Testis (tissue), 5 donors: ENCODE measurements at regions of chr3 and their contacts with region 1.

Region 1: GRCh38 chr3:14124615-14125190 is at the starts of genes CHCHD4 and TMEM43:
- DNase-seq: peak; percentile 99
- H3K4me3 ChIP-seq: peak within 1 kb of the TSS; percentile 69 to 92
- H3K27ac ChIP-seq: peak within 1 kb of the TSS; percentile 84 to 86
- H3K4me1 ChIP-seq: peaks cover 26% of the 10 kb centered on the region
- H3K27me3 ChIP-seq: no peaks in the 10 kb centered on the region
- CTCF ChIP-seq: no peak
- POLR2A ChIP-seq: no peak
- total RNA-seq, gene CHCHD4: 13.3 to 15.7 TPM
- total RNA-seq, gene TMEM43: 36.5 to 53.0 TPM

Region 2: DNA sequence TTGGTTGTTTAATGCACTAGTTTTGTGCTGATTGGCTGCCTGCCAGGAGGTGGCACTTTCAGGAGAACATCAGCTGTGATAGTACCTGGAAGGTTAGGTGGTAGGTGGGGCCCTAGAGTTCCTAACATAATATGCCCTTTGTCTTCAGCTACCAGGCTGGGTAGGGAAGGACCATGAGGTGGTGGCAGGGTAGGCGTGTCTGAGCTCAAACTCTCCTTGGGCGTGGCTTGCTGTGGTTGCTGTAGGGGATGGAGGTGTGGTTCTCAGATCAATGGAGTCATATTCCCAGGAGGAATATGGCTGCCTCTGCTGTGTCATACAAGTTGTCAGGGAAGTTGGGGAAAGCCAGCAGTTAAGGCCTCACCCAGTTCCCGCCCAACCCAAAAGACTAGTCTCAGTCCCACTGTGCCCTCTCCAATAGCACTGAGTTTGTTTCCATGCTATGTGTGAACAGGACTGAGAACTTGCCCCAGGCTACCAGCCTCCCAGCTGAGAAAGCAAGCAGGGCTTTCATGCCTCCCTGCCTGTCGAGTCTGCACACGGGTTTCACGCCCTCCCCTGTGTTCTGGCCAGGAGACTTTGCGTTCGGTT is 107.7 kb before region 1 on chr3:
- intact Hi-C with region 1: no loop called
- DNase-seq: no peak
- H3K4me3 ChIP-seq: no peak overlapping the region
- H3K27ac ChIP-seq: no peak overlapping the region
- H3K4me1 ChIP-seq: no peaks in the 10 kb centered on the region
- H3K27me3 ChIP-seq: no peaks in the 10 kb centered on the region
- CTCF ChIP-seq: no peak
- POLR2A ChIP-seq: no peak

Region 3: DNA sequence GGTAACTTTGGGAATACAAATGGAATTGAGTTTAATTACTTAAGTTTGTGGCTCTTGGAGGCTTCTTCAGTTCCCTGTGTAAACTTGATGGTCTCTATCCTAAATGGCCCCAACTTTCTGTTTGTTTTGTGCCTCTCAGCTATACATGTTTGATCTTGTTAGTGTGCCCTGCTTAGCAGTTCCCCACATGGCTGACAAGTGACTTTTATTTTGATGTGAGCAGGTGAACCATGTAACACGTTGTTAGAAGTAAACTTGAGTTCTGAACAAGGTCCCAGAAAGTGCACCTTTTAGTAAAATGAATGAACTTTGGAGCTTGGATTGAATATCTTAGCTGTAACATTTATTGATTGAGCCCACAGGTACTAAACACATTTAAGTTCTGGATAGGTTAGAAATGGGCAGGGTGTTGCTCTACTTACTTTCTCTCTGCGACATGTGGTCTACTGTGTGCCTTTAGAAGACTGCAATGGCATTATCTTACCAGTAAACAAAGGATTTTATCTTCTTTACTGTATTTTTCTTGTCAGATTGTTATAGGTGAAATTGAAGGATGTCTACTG is 58.4 kb after region 1 on chr3:
- intact Hi-C with region 1: loop called (anchors 5 kb)
- DNase-seq: no peak
- H3K4me3 ChIP-seq: no peak overlapping the region
- H3K27ac ChIP-seq: no peak overlapping the region
- H3K4me1 ChIP-seq: peaks cover 4% of the 10 kb centered on the region
- H3K27me3 ChIP-seq: no peaks in the 10 kb centered on the region
- CTCF ChIP-seq: no peak
- POLR2A ChIP-seq: no peak